Gastrocnemius medialis (tissue), 4 donors: ENCODE measurements at regions of chr18 and their contacts with region 1.

Region 1: DNA sequence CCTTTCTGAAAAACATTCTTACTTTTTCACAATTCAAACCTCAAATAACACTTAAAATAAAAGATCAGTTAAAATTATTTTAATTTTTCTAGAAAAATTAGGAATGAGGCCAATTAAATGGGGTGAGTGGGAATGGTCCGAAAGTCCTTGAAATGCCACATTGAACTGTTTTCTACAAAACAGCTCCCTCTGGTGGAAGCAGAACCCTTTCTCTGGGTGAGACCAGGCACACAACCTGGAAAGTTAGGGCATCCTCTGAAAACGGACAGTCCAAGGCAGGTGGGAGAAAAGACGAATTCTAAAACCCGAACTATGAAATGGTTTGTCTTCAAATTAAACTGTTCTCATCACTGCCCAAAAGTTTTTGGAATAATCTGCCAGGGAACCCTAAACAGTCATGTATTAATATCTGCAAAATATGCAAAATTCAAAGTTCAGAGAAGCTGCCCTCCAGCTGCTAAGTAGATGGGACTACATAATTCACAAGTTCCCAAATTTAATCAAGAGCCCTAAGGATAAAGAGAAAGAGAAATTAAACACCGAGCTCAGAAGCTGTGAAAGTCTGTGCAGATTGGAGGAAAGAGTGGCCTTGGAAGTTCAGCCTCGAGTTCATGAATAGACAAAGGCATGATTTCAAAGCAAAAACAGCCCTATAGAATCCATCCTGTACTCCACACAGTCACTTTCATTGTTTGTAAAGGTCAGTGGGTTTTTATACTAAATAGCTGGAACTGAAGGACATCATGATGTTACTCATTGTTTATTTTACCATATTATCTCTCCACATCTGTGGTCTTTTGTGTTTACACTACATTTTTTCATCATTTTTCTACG is 108.3 kb downstream of the PIEZO2 start:
- DNase-seq: peak in 1 of 2 donors; percentile 4
- ATAC-seq: peak; percentile 44 to 69
- H3K4me3 ChIP-seq: no peak overlapping the region
- H3K27ac ChIP-seq: no peak overlapping the region
- H3K4me1 ChIP-seq: peaks cover 0 to 3% of the 10 kb centered on the region in 2 donors
- H3K27me3 ChIP-seq: no peaks in the 10 kb centered on the region
- CTCF ChIP-seq: peak in 4 of 5 experiments; percentile 42 to 64 (median 56)
- POLR2A ChIP-seq: no peak

Region 2: DNA sequence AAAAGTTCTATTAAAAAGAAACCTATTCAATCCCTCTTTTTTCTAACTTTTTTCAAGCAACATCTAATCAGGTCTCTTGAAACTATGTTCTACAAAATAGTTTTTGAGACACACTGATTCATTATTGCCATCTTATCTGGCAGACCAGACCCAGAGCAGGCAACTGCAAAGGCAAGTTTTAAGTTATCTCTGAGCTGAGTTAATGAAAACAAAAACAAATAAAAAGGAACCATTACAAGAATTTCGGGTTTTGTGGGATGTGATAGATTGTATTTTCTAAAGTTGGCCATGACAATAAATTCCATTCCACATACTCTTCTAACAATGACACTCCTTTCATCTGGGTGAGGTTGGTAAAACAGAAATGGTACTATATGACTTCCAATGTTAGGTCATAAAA is 1721.7 kb before region 1 on chr18:
- in situ Hi-C with region 1: no loop called
- intact Hi-C with region 1: no loop called
- DNase-seq: no peak
- ATAC-seq: no peak
- H3K4me3 ChIP-seq: no peak overlapping the region
- H3K27ac ChIP-seq: no peak overlapping the region
- H3K4me1 ChIP-seq: no peaks in the 10 kb centered on the region
- H3K27me3 ChIP-seq: no peaks in the 10 kb centered on the region
- CTCF ChIP-seq: no peak
- POLR2A ChIP-seq: no peak

Region 3: GRCh38 chr18:11104307-11104706 is 63.3 kb after region 1 on chr18:
- in situ Hi-C with region 1: loop called in 1 of 4 experiments (anchors 10 kb)
- intact Hi-C with region 1: no loop called
- DNase-seq: no peak
- ATAC-seq: no peak
- H3K4me3 ChIP-seq: no peak overlapping the region
- H3K27ac ChIP-seq: no peak overlapping the region
- H3K4me1 ChIP-seq: no peaks in the 10 kb centered on the region
- H3K27me3 ChIP-seq: no peaks in the 10 kb centered on the region
- CTCF ChIP-seq: no peak
- POLR2A ChIP-seq: no peak

Region 4: DNA sequence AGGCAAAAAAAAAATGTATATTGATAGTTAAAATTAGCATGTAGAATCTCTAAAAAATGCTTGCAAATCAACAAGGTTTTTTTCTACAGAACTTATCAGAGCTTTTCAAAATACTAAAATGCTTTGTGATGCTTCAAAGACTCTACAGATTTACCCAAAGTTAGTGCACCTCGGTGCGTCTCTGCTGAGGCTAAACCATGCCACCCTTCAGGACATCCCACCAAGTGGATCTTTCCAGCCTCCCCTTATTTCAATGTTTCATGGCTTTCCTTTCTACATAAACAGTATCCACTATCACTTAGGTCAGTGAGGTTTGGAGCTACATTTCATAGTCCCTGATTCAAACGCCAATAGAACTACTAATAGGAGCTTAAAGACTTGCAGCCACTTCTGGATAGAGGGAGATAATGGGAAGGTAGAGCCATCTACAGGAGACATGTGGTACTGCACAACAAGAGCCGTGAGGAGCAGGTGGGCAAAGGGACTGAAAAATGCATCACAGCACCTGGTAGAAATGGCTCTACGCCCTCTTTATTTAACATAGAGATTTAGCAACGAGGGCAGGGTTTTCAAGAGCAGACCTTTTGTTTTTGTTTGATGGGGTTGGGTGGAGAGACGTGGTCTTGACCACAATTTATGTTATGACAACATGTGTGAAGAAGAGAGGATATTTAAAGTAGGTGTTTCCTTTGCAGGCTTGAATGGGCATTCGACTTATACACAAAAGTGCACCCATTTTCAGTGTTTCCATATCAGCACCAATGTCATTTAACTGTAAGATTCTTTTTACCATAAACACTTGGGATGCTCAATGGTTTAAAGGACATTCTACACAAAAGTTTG is 512.3 kb after region 1 on chr18:
- in situ Hi-C with region 1: loop called in 1 of 4 experiments (anchors 25 kb)
- intact Hi-C with region 1: no loop called
- DNase-seq: no peak
- ATAC-seq: peak; percentile 69 to 82
- H3K4me3 ChIP-seq: no peak overlapping the region
- H3K27ac ChIP-seq: no peak overlapping the region
- H3K4me1 ChIP-seq: no peaks in the 10 kb centered on the region
- H3K27me3 ChIP-seq: no peaks in the 10 kb centered on the region
- CTCF ChIP-seq: peak; percentile 75 to 87 (median 79)
- POLR2A ChIP-seq: no peak